Posterior cingulate gyrus (tissue), 11 donors: ENCODE measurements at regions of chr16 and their contacts with region 1.

Region 1: GRCh38 chr16:76278980-76279379 is 1.8 kb downstream of the CNTNAP4 start:
- DNase-seq: no peak

Region 2: DNA sequence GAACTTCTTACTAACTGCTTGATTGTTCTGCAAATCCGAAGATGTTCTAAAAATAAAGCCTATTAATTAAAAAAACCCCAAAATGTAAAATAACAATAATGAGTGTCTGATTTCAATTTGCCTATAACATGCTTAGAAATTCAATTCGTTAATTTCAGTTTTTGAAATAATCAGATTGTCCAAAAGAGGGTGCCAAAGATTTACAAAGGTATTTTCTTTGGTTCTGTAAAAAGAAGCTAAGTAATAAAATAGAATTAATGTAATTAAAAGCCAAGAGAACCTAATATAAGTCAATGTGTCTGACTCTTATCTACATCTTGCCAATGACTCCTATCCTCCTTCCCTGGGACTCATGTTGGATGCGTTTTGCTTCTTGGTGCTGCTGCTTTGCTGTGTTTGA is 477.7 kb before region 1 on chr16:
- intact Hi-C with region 1: loop called (anchors 2 kb)
- DNase-seq: no peak

Region 3: DNA sequence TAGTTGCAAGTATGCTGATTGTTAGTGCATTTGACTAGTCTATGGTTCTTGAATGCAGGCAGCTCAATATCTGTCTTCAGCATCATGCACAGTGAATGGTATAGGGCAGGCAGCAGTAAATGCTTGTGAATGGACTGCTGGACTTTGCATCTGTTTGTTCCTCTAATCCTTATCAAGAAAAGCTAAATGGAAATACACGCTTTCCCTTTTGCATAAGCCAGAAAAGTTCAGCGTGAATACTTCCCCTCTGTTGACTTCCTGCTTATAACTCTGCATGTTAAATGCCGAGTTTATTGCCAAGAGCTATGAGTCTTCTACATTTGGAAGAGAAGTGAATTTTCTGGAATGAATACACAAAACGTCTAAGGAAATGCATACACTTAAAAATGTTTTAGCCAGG is 424.8 kb before region 1 on chr16:
- intact Hi-C with region 1: loop called (anchors 10 kb)
- DNase-seq: no peak

Region 4: GRCh38 chr16:75983741-75984381 is 295.1 kb before region 1 on chr16:
- intact Hi-C with region 1: loop called (anchors 10 kb)
- DNase-seq: no peak

Region 5: DNA sequence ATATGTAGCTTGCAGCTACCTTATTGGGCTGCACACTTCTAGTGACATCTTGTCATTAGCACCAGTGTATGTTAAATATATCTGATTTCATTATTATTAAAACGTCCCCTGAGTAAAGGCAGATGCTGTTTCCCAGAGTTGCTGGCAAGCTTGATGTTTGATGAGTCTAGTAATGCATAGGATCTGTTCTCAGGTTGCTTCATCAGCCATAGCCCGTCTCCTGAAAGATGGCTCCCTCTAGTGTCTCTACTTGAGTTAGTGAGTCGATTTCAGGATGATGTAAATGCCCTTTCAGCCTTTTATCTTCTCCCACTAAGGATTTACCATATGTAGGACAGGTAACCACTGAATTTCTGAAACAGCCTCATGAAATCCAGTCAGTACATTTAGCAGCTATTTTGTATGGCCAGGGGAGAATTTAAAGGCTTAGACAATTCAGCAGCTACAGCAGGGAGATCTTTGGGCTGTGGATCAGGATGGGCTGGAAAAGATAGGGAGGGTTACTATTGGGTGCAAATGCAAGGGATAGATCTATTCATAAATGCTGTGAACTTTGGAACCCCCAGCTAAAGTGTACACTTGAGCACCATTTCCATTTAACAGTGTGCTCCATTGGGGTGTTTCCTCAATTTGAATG is 374.5 kb after region 1 on chr16:
- intact Hi-C with region 1: loop called (anchors 1 kb)
- DNase-seq: peak in 4 of 10 donors; percentile 19 to 61 (median 30)

Region 6: DNA sequence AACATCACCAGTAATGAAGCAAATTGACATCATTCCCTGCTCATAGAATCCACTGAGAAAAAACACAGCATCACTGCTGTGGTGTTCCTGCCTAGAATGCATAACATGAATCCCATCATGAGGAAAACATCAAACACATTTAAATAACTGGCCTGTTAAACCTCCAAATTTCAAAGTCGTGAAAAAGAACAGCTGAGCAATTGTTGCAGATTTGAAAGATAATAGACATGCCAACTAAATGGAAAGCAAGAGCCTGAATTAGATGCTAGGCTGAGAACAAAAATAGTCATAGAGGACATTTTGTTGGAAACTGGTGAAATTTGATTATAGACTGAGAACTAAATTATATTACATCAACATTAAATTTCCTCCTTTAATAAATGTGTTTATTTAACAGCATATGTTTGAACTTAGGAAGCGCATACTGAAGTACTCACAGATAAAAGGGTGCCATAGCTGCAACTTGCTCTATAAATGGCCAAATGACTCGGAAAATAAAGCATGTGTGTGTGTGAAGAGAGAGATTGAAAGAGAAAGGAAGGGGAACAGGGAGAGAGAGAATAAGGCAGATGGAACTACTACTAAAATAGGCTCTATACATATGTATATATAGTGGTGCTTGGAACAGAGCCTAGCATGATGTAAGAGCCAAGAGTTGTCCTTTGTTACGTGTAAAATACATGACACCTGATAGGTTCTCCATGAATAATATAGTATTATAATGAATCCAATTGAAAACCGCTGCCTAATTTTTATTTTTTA is 607.0 kb after region 1 on chr16:
- intact Hi-C with region 1: no loop called
- DNase-seq: no peak

Region 7: DNA sequence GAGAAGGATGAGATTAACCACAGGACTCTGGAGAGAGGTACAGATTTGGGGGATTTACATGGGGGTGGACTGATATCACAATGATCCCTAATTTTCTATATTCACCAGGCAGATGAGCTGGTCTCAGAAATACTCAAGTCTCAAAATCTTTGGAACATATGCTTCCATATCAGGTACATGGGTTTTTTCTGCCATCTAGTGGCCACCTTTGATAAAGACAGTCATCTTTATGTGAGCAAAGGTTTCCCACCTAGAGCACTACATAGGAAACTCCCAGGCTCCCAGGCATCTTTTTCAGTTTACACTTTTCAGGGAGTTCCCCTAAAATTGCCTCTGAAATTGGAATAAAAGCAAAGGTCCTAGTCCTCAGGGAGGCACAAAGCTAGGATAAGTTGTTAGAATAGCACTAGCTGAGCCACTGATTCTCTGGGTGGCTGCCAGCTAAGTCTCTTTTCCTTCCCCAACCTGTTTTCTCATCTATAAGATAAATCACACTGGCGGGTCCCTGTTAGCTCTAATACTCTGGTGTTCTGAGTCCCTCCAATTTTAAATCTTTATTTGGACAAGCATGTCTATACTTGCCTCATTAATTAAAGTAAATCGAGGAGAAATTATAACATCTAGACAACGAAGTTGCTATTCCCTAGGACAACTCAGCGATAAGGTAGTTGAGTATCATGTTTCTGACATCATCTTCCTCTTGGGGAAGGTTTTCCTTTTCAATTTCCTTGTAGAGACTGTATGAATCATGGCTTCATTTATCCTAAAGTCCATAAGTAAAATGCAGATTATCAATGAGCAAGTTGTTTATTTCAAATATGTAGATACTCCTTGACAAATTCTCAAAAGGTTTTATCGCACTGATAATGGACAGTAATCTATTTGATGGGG is 893.0 kb after region 1 on chr16:
- intact Hi-C with region 1: loop called (anchors 5 kb)
- DNase-seq: no peak